Transverse colon (tissue), 4 donors: ENCODE measurements at regions of chr6 and their contacts with region 1.

Region 1: DNA sequence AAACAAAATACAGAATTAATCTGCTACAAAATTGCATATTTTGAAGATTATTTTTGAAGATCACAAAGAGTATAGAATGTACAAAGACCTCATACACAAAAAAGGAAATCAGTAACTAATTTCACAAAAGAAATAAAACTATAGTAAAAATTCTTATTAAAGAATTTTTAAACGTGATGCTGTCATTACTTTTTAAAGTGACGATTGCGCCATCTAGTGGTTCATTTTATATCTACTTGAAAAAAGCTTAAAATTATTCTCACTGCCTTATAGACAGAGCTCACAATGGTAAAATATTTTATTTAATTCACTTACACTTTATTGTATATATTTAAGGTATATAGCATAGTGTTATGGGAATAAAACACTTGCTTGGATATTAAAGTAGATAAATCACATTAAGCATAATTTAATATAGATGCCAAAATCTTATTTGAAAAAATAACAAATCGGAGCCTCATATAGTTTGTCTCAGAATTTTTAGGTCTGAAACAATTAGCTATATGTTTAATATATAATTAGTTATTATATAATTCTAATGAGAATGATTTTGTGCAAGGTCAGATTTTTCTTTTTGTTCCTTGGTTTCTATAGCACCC is 128.8 kb downstream of the PHF3 start:
- DNase-seq: no peak
- H3K4me3 ChIP-seq: no peak overlapping the region
- H3K27ac ChIP-seq: no peak overlapping the region
- H3K4me1 ChIP-seq: peaks cover 0 to 3% (median 0%) of the 10 kb centered on the region in 4 donors
- H3K27me3 ChIP-seq: peaks cover 11% of the 10 kb centered on the region
- CTCF ChIP-seq: peak; percentile 62 to 78 (median 67)
- EP300 ChIP-seq: no peak
- POLR2A ChIP-seq: no peak

Region 2: GRCh38 chr6:63307581-63308246 is 456.7 kb before region 1 on chr6:
- in situ Hi-C with region 1: loop called in 1 of 4 experiments (anchors 25 kb)
- intact Hi-C with region 1: no loop called
- DNase-seq: no peak
- H3K4me3 ChIP-seq: no peak overlapping the region
- H3K27ac ChIP-seq: peak overlapping the region in 2 of 4 donors; percentile 71 to 78
- H3K4me1 ChIP-seq: peaks cover 0 to 34% (median 18%) of the 10 kb centered on the region in 4 donors
- H3K27me3 ChIP-seq: no peaks in the 10 kb centered on the region
- CTCF ChIP-seq: peak in 3 of 5 experiments; percentile 12 to 24 (median 23)
- EP300 ChIP-seq: no peak
- POLR2A ChIP-seq: no peak

Region 3: GRCh38 chr6:63352587-63353285 is 411.7 kb before region 1 on chr6:
- in situ Hi-C with region 1: loop called in 3 of 4 experiments (anchors 10 to 25 kb)
- intact Hi-C with region 1: no loop called
- DNase-seq: peak; percentile 37
- H3K4me3 ChIP-seq: no peak overlapping the region
- H3K27ac ChIP-seq: peak overlapping the region; percentile 7 to 35 (median 26)
- H3K4me1 ChIP-seq: peaks cover 3 to 20% (median 5%) of the 10 kb centered on the region in 4 donors
- H3K27me3 ChIP-seq: no peaks in the 10 kb centered on the region
- CTCF ChIP-seq: peak; percentile 54 to 61 (median 59)
- EP300 ChIP-seq: no peak
- POLR2A ChIP-seq: no peak

Region 4: GRCh38 chr6:63598049-63599036 is 166.1 kb before region 1 on chr6:
- in situ Hi-C with region 1: loop called (anchors 5 to 25 kb)
- intact Hi-C with region 1: loop called (anchors 1 kb)
- DNase-seq: peak; percentile 81
- H3K4me3 ChIP-seq: peak overlapping the region; percentile 29 to 62 (median 41)
- H3K27ac ChIP-seq: peak overlapping the region; percentile 24 to 73 (median 71)
- H3K4me1 ChIP-seq: peaks cover 0 to 10% (median 4%) of the 10 kb centered on the region in 4 donors
- H3K27me3 ChIP-seq: no peaks in the 10 kb centered on the region
- CTCF ChIP-seq: peak; percentile 82 to 93 (median 87)
- EP300 ChIP-seq: no peak
- POLR2A ChIP-seq: no peak